Heart right ventricle (tissue), 16 donors: ENCODE measurements at regions of chr13 and their contacts with region 1.

Region 1: DNA sequence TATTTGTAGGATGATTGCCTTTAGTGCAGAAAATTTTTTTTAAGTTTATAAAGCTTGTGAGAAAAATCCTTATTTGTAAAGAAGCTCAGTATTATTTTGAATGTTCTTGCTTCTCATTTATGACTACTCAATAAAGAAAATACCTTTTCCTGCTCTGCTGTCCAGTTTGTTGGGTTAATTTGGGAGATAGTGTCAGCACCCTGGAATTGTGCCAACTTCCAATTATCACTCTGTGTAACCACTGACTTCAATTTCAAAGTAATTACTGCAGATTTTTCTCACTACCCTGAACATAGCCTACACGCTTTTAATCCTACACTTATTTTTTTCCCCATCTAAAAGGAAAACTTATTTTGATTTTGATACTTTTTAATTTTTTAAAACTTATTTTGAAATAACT is 93.1 kb downstream of the GGACT start:
- DNase-seq: no peak
- ATAC-seq: no peak
- H3K4me3 ChIP-seq: no peak overlapping the region
- H3K27ac ChIP-seq: no peak overlapping the region
- H3K4me1 ChIP-seq: peaks cover 0 to 62% (median 0%) of the 10 kb centered on the region in 9 donors
- H3K27me3 ChIP-seq: no peaks in the 10 kb centered on the region
- CTCF ChIP-seq: no peak

Region 2: DNA sequence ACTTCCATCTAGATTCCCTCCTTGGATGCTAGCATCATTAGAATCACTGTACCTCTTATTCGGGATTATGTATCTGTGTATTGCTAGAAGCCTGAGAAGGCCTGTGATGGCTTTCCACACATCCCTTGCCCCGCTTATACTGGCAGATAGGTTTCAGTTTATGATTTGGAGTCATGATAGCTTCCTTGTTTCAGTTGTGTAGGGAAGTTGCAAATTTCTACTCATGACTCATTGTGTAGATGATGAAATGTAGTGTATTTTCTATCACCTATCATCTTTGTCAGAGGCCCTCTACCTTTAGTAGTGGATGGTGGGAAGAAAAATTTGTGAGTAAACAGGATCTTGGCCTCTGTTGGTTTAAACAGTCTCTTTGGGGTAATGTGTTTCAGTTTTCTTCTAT is 72.1 kb before region 1 on chr13:
- intact Hi-C with region 1: loop called in 1 of 10 experiments (anchors 2 kb)
- DNase-seq: no peak
- ATAC-seq: no peak
- H3K4me3 ChIP-seq: no peak overlapping the region
- H3K27ac ChIP-seq: no peak overlapping the region
- H3K4me1 ChIP-seq: no peaks in the 10 kb centered on the region
- H3K27me3 ChIP-seq: no peaks in the 10 kb centered on the region
- CTCF ChIP-seq: no peak

Region 3: GRCh38 chr13:100883453-100883852 is 388.0 kb after region 1 on chr13:
- intact Hi-C with region 1: no loop called
- DNase-seq: no peak
- ATAC-seq: no peak
- H3K4me3 ChIP-seq: no peak overlapping the region
- H3K27ac ChIP-seq: no peak overlapping the region
- H3K4me1 ChIP-seq: peaks cover 0 to 16% (median 6%) of the 10 kb centered on the region in 9 donors
- H3K27me3 ChIP-seq: no peaks in the 10 kb centered on the region
- CTCF ChIP-seq: no peak